Astrocyte of the cerebellum (primary cell): ENCODE measurements at regions of chr3 and their contacts with region 1.

Region 1: GRCh38 chr3:11791339-11792128 is 55.2 kb downstream of the TAMM41 start:
- DNase-seq: no peak
- H3K4me3 ChIP-seq: no peak overlapping the region
- CTCF ChIP-seq: no peak

Region 2: GRCh38 chr3:11724615-11725342 is 66.8 kb before region 1 on chr3:
- in situ Hi-C with region 1: loop called (anchors 5 kb)
- DNase-seq: no peak
- H3K4me3 ChIP-seq: no peak overlapping the region
- CTCF ChIP-seq: no peak

Region 3: GRCh38 chr3:11757441-11757875 is 34.1 kb before region 1 on chr3:
- in situ Hi-C with region 1: no loop called
- DNase-seq: no peak
- H3K4me3 ChIP-seq: no peak overlapping the region
- CTCF ChIP-seq: no peak